CD4-positive, alpha-beta memory T cell (primary cell): ENCODE measurements at regions of chr9 and their contacts with region 1.

Region 1: GRCh38 chr9:95127249-95128176 is 190.0 kb downstream of the FANCC start:
- DNase-seq: peak; percentile 48 to 56 (median 55)
- H3K4me3 ChIP-seq: no peak overlapping the region
- H3K4me3 Mint-ChIP-seq: peak overlapping the region in 1 of 8 donors; percentile 36
- H3K27ac ChIP-seq: no peak overlapping the region
- H3K27ac Mint-ChIP-seq: no peak overlapping the region
- H3K4me1 ChIP-seq: peaks cover 4% of the 10 kb centered on the region
- H3K4me1 Mint-ChIP-seq: peaks cover 0 to 4% (median 2%) of the 10 kb centered on the region in 4 donors
- H3K27me3 ChIP-seq: no peaks in the 10 kb centered on the region
- H3K27me3 Mint-ChIP-seq: no peaks in the 10 kb centered on the region

Region 2: GRCh38 chr9:94672811-94673487 is 454.6 kb before region 1 on chr9:
- CTCF ChIA-PET with region 1: interaction called, 385 read pairs
- POLR2A ChIA-PET with region 1: interaction called, 4 read pairs
- intact Hi-C with region 1: loop called (anchors 1 kb)
- DNase-seq: no peak
- H3K4me3 ChIP-seq: no peak overlapping the region
- H3K4me3 Mint-ChIP-seq: no peak overlapping the region
- H3K27ac ChIP-seq: no peak overlapping the region
- H3K27ac Mint-ChIP-seq: no peak overlapping the region
- H3K4me1 ChIP-seq: no peaks in the 10 kb centered on the region
- H3K4me1 Mint-ChIP-seq: peaks cover 4 to 9% (median 6%) of the 10 kb centered on the region in 4 donors
- H3K27me3 ChIP-seq: no peaks in the 10 kb centered on the region
- H3K27me3 Mint-ChIP-seq: no peaks in the 10 kb centered on the region

Region 3: DNA sequence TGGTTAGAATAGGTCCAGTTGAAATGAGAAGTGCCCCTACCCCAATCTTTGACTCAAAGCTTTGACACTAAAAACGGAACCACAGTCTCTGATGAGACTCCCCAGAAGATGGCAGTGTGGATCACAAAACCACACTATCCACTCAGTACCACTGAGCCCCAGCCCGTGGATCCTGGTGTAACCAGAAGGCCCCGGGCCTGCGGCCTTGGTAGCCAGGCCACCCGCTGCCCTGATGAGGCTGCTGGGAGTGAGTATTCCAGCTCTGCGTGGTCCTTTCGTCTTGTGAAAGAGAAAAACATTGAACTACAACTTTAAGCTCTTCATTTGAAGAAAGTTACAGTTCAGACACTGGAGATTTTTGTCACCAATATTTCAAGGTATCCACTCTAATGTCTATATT is 446.0 kb before region 1 on chr9:
- CTCF ChIA-PET with region 1: interaction called, 385 read pairs
- POLR2A ChIA-PET with region 1: interaction called, 4 read pairs
- intact Hi-C with region 1: loop called (anchors 1 kb)
- DNase-seq: peak; percentile 49 to 56 (median 55)
- H3K4me3 ChIP-seq: no peak overlapping the region
- H3K4me3 Mint-ChIP-seq: no peak overlapping the region
- H3K27ac ChIP-seq: no peak overlapping the region
- H3K27ac Mint-ChIP-seq: no peak overlapping the region
- H3K4me1 ChIP-seq: no peaks in the 10 kb centered on the region
- H3K4me1 Mint-ChIP-seq: no peaks in the 10 kb centered on the region
- H3K27me3 ChIP-seq: no peaks in the 10 kb centered on the region
- H3K27me3 Mint-ChIP-seq: peaks cover 0 to 3% of the 10 kb centered on the region in 2 donors

Region 4: GRCh38 chr9:94783102-94783664 is 344.3 kb before region 1 on chr9:
- CTCF ChIA-PET with region 1: interaction called, 145 read pairs
- POLR2A ChIA-PET with region 1: no interaction called
- intact Hi-C with region 1: loop called (anchors 1 kb)
- DNase-seq: peak in 4 of 5 donors; percentile 27 to 33 (median 28)
- H3K4me3 ChIP-seq: no peak overlapping the region
- H3K4me3 Mint-ChIP-seq: peak overlapping the region in 1 of 8 donors; percentile 3
- H3K27ac ChIP-seq: no peak overlapping the region
- H3K27ac Mint-ChIP-seq: no peak overlapping the region
- H3K4me1 ChIP-seq: peaks cover 4% of the 10 kb centered on the region
- H3K4me1 Mint-ChIP-seq: peaks cover 3 to 13% (median 8%) of the 10 kb centered on the region in 4 donors
- H3K27me3 ChIP-seq: no peaks in the 10 kb centered on the region
- H3K27me3 Mint-ChIP-seq: no peaks in the 10 kb centered on the region

Region 5: GRCh38 chr9:95116003-95116807 is 11.3 kb before region 1 on chr9:
- CTCF ChIA-PET with region 1: interaction called, 55 read pairs
- POLR2A ChIA-PET with region 1: no interaction called
- intact Hi-C with region 1: no loop called
- DNase-seq: no peak
- H3K4me3 ChIP-seq: no peak overlapping the region
- H3K4me3 Mint-ChIP-seq: no peak overlapping the region
- H3K27ac ChIP-seq: no peak overlapping the region
- H3K27ac Mint-ChIP-seq: no peak overlapping the region
- H3K4me1 ChIP-seq: no peaks in the 10 kb centered on the region
- H3K4me1 Mint-ChIP-seq: no peaks in the 10 kb centered on the region
- H3K27me3 ChIP-seq: no peaks in the 10 kb centered on the region
- H3K27me3 Mint-ChIP-seq: no peaks in the 10 kb centered on the region

Region 6: DNA sequence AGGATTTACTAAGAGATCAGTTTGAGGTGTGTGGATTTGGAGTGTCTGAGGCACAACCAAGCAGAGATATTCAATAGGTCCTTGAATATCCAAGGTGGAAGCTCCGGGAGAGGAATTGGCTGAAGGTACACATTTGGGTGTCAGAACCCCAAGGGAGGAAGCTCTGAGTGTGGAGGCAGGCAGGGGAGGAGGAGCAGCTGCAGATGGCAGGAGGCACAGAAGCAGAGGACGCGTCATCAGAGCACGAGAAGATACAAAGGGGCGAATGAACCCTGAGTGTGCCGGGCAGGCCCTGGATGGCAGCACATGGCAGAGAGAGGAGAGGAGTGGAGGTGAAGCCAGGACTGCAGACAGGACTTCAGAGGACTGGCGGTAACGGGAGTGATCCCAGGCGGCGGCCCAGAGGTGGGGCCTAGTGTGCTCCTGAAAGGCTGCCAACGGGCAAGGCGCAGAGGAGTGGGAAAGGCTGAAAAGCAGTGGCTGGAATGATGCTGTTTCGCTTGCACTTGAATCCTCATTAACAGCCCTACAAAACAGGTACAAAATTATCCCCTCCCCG is 10.2 kb after region 1 on chr9:
- CTCF ChIA-PET with region 1: interaction called, 20 read pairs
- POLR2A ChIA-PET with region 1: no interaction called
- intact Hi-C with region 1: no loop called
- DNase-seq: no peak
- H3K4me3 ChIP-seq: no peak overlapping the region
- H3K4me3 Mint-ChIP-seq: no peak overlapping the region
- H3K27ac ChIP-seq: no peak overlapping the region
- H3K27ac Mint-ChIP-seq: no peak overlapping the region
- H3K4me1 ChIP-seq: no peaks in the 10 kb centered on the region
- H3K4me1 Mint-ChIP-seq: no peaks in the 10 kb centered on the region
- H3K27me3 ChIP-seq: no peaks in the 10 kb centered on the region
- H3K27me3 Mint-ChIP-seq: no peaks in the 10 kb centered on the region

Region 7: GRCh38 chr9:95249986-95250385 is 122.5 kb after region 1 on chr9:
- CTCF ChIA-PET with region 1: no interaction called
- POLR2A ChIA-PET with region 1: no interaction called
- intact Hi-C with region 1: no loop called
- DNase-seq: no peak
- H3K4me3 ChIP-seq: no peak overlapping the region
- H3K4me3 Mint-ChIP-seq: no peak overlapping the region
- H3K27ac ChIP-seq: no peak overlapping the region
- H3K27ac Mint-ChIP-seq: no peak overlapping the region
- H3K4me1 ChIP-seq: no peaks in the 10 kb centered on the region
- H3K4me1 Mint-ChIP-seq: no peaks in the 10 kb centered on the region
- H3K27me3 ChIP-seq: no peaks in the 10 kb centered on the region
- H3K27me3 Mint-ChIP-seq: no peaks in the 10 kb centered on the region

Region 8: DNA sequence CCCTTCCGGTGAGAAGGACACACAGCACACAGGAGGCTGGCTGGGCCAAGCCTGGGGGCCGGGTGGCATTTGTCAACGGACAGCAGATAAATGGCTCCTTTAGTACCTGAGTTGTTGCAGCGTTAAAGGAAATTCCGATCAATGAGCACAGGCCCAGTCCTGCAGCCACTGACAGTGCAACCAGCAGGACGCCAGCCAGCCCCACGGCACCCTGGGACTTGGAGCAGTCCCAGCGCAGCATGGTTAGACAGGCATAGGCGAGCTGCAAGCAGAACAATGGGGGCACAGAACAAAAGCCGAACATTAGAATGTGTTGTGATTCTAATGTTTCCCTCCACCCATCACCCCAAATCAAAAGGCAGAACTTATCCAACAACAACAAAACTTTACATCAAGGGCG is 349.9 kb after region 1 on chr9:
- CTCF ChIA-PET with region 1: no interaction called
- POLR2A ChIA-PET with region 1: no interaction called
- intact Hi-C with region 1: no loop called
- DNase-seq: no peak
- H3K4me3 ChIP-seq: no peak overlapping the region
- H3K4me3 Mint-ChIP-seq: no peak overlapping the region
- H3K27ac ChIP-seq: no peak overlapping the region
- H3K27ac Mint-ChIP-seq: no peak overlapping the region
- H3K4me1 ChIP-seq: no peaks in the 10 kb centered on the region
- H3K4me1 Mint-ChIP-seq: peaks cover 0 to 1% (median 0%) of the 10 kb centered on the region in 4 donors
- H3K27me3 ChIP-seq: no peaks in the 10 kb centered on the region
- H3K27me3 Mint-ChIP-seq: peaks cover 0 to 1% of the 10 kb centered on the region in 2 donors

Region 9: DNA sequence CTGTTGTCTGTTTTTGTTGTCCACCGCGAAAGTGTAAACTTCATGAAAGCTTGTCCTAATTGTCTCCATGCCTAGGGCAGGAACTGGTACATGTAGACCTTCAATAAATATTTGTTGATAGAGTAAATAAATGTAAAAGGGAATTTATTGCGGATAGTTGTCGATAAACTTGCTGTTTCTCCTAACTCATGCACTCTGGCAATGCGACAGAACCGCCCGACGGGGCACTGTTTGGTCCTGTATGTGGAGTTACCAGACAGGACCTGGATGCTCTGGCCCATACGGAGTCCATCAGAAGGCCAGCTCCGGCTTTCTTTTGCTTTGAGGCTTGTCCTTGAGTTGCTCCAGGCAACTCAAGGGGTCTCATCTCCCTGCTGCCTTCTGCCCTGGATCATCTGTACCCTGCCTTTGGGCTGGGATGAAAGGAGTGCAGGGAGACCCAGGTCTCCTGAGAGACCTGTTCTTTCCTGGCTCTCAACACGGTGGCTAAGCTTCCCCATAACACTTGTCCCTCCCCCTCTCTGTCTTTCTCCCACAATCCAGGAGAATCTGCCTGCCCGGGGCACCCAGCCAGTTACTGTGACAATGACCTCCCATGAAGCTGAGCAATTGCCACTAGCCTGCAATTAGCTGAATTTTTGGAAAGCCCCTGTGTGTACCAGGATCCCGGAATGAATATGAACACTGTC is 538.7 kb after region 1 on chr9:
- CTCF ChIA-PET with region 1: no interaction called
- POLR2A ChIA-PET with region 1: no interaction called
- intact Hi-C with region 1: no loop called
- DNase-seq: no peak
- H3K4me3 ChIP-seq: no peak overlapping the region
- H3K4me3 Mint-ChIP-seq: no peak overlapping the region
- H3K27ac ChIP-seq: no peak overlapping the region
- H3K27ac Mint-ChIP-seq: no peak overlapping the region
- H3K4me1 ChIP-seq: no peaks in the 10 kb centered on the region
- H3K4me1 Mint-ChIP-seq: peaks cover 0 to 1% (median 0%) of the 10 kb centered on the region in 4 donors
- H3K27me3 ChIP-seq: no peaks in the 10 kb centered on the region
- H3K27me3 Mint-ChIP-seq: peaks cover 8 to 11% of the 10 kb centered on the region in 2 donors